ENCODE measurements at regions of chr19 and their contacts with region 1.

Region 1: DNA sequence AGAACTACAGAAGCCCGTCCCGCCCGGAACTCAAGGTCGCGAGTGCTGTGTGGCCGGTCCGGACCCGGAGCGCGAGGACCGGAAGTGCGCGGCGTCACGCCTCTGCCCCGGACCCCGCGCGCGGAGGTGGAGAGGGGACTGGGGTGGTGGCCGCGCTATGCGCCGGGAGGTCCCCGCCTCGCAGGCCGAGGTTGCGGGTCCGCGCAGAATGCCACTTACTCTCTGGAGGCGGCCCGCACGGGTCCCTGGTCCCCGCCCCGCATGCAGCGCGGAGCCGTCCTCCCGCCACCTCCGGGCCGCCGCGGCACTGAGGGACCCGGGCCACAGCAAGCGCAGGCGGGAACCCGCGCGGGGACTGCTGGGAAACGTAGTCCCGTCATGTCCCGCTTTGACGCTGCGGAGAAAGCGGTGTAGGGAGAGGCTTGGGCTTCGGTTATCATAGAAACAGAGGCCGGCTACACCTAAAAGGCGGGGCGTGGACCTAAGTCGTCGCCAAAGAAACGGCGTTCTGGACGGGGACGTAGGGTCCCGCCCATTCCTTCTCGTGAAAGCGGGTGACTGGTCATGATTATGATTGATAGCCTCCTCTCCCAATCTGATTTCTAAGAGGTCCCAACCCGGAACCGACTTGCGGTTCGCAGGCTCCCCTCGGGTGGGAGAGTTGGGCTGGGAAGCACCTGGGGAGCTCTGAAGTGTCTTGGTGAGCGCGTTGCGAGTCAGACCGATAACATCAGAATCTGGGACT is at the start of gene ZNF837:
- DNase-seq: peak; percentile 100
- ATAC-seq: peak; percentile 91
- H3K4me3 ChIP-seq: peak within 1 kb of the TSS; percentile 79
- H3K27ac ChIP-seq: peak within 1 kb of the TSS; percentile 73
- H3K4me1 ChIP-seq: peaks cover 20% of the 10 kb centered on the region
- H3K27me3 ChIP-seq: no peaks in the 10 kb centered on the region
- CTCF ChIP-seq: no peak
- total RNA-seq, gene ZNF837: 9.5 and 12.6 TPM in 2 replicates

Region 2: GRCh38 chr19:58305065-58305931 is 75.6 kb before region 1 on chr19 and contains the start of gene ERVK3-1:
- CTCF ChIA-PET with region 1: no interaction called
- POLR2A ChIA-PET with region 1: no interaction called
- intact Hi-C with region 1: loop called (anchors 2 kb)
- DNase-seq: peak; percentile 98
- ATAC-seq: peak; percentile 100
- H3K4me3 ChIP-seq: peak within 1 kb of the TSS; percentile 81
- H3K27ac ChIP-seq: peak within 1 kb of the TSS; percentile 8
- H3K4me1 ChIP-seq: peaks cover 8% of the 10 kb centered on the region
- H3K27me3 ChIP-seq: no peaks in the 10 kb centered on the region
- CTCF ChIP-seq: no peak
- total RNA-seq, gene ERVK3-1: 104 and 116 TPM in 2 replicates

Region 3: DNA sequence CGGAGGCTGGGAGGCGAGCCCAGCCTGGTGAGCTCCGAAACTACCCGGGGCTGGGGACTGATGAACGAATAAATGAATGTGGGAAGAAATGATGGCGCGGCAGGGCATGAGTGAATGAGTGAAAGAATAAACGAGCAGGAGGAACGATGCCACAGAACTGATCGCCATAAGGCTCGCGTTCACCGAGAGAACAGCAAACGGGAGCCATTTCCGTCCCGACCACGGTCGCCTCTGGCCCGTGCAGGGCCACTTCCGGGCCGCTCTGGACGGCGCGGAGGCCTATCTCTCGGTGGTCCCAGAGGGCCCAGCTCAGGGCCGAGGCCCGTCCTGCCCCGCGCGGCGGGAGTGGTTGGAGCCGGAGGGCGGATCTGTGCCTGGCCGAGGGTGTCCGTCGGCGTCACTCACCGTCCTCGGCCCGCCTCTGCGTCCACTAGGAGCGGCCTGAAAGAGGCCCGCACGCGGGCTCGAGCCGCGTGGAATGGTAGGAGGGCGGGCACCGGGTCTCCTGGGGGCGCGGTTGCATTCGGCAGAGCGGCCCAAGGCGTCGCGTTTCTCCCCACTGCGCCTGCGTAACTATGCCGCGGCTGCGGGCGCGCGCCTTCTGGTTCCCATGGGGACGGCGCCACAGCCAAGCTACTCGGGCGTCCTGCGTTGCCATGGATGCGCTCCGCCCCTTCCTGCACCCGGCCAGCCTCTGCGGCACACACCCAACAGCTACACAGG is 18.5 kb before region 1 on chr19 and contains the start of gene ZNF497:
- CTCF ChIA-PET with region 1: no interaction called
- POLR2A ChIA-PET with region 1: interaction called, 6 read pairs
- intact Hi-C with region 1: loop called (anchors 1 kb)
- DNase-seq: peak; percentile 99
- ATAC-seq: peak; percentile 94
- H3K4me3 ChIP-seq: peak within 1 kb of the TSS; percentile 79
- H3K27ac ChIP-seq: peak within 1 kb of the TSS; percentile 78
- H3K4me1 ChIP-seq: peaks cover 9% of the 10 kb centered on the region
- H3K27me3 ChIP-seq: no peaks in the 10 kb centered on the region
- CTCF ChIP-seq: no peak
- total RNA-seq, gene ZNF497: 2.2 and 4.0 TPM in 2 replicates

Region 4: GRCh38 chr19:58451358-58452101 is 70.6 kb after region 1 on chr19 and contains the start of gene ZNF324B:
- CTCF ChIA-PET with region 1: no interaction called
- POLR2A ChIA-PET with region 1: no interaction called
- intact Hi-C with region 1: loop called (anchors 2 kb)
- DNase-seq: peak; percentile 99
- ATAC-seq: peak; percentile 97
- H3K4me3 ChIP-seq: peak within 1 kb of the TSS; percentile 74
- H3K27ac ChIP-seq: no peak within 1 kb of the TSS
- H3K4me1 ChIP-seq: peaks cover 5% of the 10 kb centered on the region
- H3K27me3 ChIP-seq: no peaks in the 10 kb centered on the region
- CTCF ChIP-seq: no peak
- total RNA-seq, gene ZNF324B: 11.2 and 12.8 TPM in 2 replicates